ENCODE measurements at regions of chr6 and their contacts with region 1.

Region 1: GRCh38 chr6:85482905-85483700 is 33.2 kb downstream of the NT5E start:
- DNase-seq: no peak
- H3K4me3 ChIP-seq: no peak overlapping the region
- H3K27ac ChIP-seq: no peak overlapping the region
- H3K27me3 ChIP-seq: no peaks in the 10 kb centered on the region
- CTCF ChIP-seq: peak; percentile 100

Region 2: GRCh38 chr6:85240787-85241385 is 242.2 kb before region 1 on chr6:
- CTCF ChIA-PET with region 1: no interaction called
- POLR2A ChIA-PET with region 1: no interaction called
- DNase-seq: no peak
- H3K4me3 ChIP-seq: no peak overlapping the region
- H3K27ac ChIP-seq: no peak overlapping the region
- H3K27me3 ChIP-seq: no peaks in the 10 kb centered on the region
- CTCF ChIP-seq: no peak

Region 3: DNA sequence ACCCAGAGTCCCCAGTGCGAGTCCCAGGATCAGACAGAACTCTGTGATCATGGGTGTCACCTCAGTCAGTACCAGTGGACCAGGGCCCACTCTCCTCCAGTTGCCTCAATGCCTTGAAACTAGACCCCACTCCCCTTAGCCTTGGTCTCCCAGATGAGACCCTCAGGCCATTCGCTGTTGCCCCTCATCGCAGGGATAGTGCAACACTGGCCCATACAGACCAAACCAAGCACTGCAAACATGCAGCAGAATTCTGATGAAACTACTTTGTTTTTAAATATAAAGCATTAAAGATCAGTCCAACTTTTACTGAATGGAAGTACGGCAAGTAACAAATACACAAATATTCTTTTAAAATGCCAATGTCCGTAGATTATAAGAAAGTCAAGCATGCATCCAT is 134.5 kb before region 1 on chr6:
- CTCF ChIA-PET with region 1: interaction called, 412 read pairs
- POLR2A ChIA-PET with region 1: no interaction called
- DNase-seq: no peak
- H3K4me3 ChIP-seq: no peak overlapping the region
- H3K27ac ChIP-seq: no peak overlapping the region
- H3K27me3 ChIP-seq: no peaks in the 10 kb centered on the region
- CTCF ChIP-seq: peak; percentile 41; the same call in 1 of the 2 replicates

Region 4: DNA sequence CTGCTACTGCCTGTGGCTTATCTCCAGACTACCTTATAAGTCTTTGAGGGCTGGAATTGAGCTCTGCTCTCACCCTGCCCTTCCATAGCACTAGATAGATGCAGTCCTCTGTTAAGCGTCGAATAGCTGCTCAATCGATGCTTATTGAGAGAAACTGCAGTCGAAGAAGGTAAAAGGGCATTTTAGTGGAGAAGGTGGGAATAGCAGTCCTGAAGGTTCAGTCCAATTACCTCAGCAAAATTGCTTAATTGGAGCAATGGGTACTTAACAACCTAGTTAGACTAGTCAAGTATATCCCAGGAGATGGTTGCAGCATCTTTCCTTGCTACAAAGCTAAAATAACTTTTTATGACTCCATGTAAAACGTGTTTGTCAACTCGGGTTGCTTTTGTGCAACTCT is 100.1 kb before region 1 on chr6:
- CTCF ChIA-PET with region 1: interaction called, 12 read pairs
- POLR2A ChIA-PET with region 1: no interaction called
- DNase-seq: no peak
- H3K4me3 ChIP-seq: no peak overlapping the region
- H3K27ac ChIP-seq: no peak overlapping the region
- H3K27me3 ChIP-seq: no peaks in the 10 kb centered on the region
- CTCF ChIP-seq: no peak

Region 5: DNA sequence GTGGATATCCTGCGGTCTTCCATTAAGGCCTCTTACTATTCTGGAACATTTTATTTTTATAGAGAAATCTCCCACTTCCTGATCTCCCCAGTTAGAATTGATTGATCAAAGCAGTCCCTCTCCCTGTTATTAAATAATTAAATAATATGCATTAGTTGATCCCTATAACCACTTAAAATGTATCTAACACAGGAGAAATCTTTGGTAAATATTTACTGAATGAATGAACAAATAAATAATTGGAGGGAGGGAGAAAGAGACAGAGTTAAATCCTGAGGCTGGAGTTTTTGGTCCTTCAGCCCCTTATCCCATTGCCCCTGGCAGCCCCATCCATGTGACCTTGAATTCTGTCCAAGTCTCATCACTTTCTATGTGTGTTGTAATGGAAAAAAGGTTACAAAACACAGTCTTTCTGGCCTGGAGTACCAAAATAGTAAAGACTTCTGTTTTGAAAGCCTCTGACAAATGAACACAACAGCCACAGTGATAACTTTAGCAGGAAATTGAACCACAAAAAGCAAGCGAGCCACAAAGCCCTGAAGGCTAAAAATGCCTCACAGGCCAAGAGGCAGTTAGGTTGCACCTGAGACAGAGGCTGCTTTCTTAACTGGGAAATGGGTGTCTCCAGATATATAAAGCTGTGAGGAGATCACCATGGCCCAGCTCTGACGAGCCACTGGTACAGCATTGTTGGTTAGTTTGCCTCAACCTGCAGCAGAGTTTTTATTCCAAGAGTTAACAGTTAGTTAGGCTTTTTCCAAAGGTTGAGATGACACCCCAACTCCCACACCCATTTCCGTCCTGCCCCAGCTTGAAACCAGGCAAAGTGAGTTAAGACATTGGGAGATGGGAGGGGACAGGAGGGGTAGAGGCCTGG is 21.9 kb before region 1 on chr6:
- CTCF ChIA-PET with region 1: interaction called, 201 read pairs
- POLR2A ChIA-PET with region 1: no interaction called
- DNase-seq: no peak
- H3K4me3 ChIP-seq: no peak overlapping the region
- H3K27ac ChIP-seq: no peak overlapping the region
- H3K27me3 ChIP-seq: no peaks in the 10 kb centered on the region
- CTCF ChIP-seq: no peak

Region 6: DNA sequence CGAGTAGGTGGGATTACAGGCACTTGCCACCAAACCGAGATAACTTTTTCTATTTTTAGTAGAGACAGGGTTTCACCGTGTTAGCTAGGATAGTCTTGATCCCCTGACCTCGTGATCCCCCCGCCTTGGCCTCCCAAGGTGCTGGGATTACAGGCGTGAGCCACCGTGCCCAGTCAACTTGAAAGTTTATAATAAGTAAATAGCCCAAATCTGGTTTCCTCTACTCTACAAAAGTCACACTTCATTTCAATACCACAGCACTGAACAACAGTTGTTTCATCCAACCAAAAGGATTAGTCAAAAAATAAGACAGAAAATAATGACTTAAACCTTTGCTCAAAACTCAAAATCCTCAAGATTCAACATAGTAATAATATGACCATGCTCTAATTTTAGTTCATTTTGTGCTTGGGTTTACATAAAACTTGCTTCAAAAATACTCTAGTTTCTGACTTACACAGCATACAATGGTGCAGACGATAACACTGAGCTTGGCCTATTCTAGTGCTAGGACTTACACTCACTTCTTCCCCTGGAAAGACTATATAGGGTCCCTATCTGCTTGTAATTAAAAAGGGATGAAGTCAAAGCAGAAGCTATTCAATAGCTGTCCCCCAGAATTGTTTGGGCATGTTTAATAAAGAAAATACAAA is 23.5 kb after region 1 on chr6:
- CTCF ChIA-PET with region 1: interaction called, 138 read pairs
- POLR2A ChIA-PET with region 1: no interaction called
- DNase-seq: no peak
- H3K4me3 ChIP-seq: no peak overlapping the region
- H3K27ac ChIP-seq: no peak overlapping the region
- H3K27me3 ChIP-seq: no peaks in the 10 kb centered on the region
- CTCF ChIP-seq: no peak